K562 (cell line): ENCODE measurements at regions of chr5 and their contacts with region 1.

Region 1: GRCh38 chr5:112551419-112552032 is 132.4 kb upstream of the EPB41L4A start:
- DNase-seq: peak; percentile 43 to 75 (median 48)
- ATAC-seq: peak; percentile 43
- H3K4me3 ChIP-seq: no peak overlapping the region
- H3K27ac ChIP-seq: no peak overlapping the region
- H3K4me1 ChIP-seq: peaks cover 16 to 37% of the 10 kb centered on the region in 2 experiments
- H3K27me3 ChIP-seq: peaks cover 0 to 5% of the 10 kb centered on the region in 2 experiments; a peak in 1 of 5 replicates
- CTCF ChIP-seq: peak; percentile 51 to 88 (median 69); a peak in 5 of 6 replicates
- EP300 ChIP-seq: no peak
- POLR2A ChIP-seq: no peak
- RAD21 ChIP-seq: peak; percentile 94 to 95

Region 2: DNA sequence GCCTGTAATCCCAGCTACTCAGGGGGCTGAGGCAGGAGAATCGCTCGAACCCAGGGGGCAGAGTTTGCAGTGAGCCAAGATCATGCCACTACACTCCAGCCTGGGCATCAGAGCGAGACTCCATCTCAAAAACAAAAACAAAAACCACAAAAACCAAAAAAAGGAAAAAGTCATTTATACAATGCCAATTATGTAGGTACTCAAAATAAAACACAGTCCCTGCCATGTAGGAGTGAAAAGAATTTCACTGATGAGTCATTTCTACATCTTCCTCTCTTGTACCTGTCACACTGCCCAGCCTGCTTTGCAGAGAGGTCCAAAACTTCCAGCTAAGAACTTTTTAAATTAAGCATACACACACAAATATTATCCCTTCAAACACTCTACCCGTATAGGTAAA is 348.3 kb before region 1 on chr5:
- CTCF ChIA-PET with region 1: no interaction called
- POLR2A ChIA-PET with region 1: no interaction called
- in situ Hi-C with region 1: no loop called
- intact Hi-C with region 1: no loop called
- DNase-seq: no peak
- ATAC-seq: no peak
- H3K4me3 ChIP-seq: no peak overlapping the region
- H3K27ac ChIP-seq: no peak overlapping the region
- H3K4me1 ChIP-seq: peaks cover 0 to 14% of the 10 kb centered on the region in 2 experiments; a peak in 3 of 5 replicates
- H3K27me3 ChIP-seq: peaks cover 5 to 6% of the 10 kb centered on the region in 2 experiments; a peak in 4 of 5 replicates
- CTCF ChIP-seq: no peak
- EP300 ChIP-seq: no peak
- POLR2A ChIP-seq: no peak
- RAD21 ChIP-seq: no peak

Region 3: GRCh38 chr5:112492291-112492690 is 59.2 kb before region 1 on chr5:
- CTCF ChIA-PET with region 1: no interaction called
- POLR2A ChIA-PET with region 1: interaction called, 3 read pairs
- in situ Hi-C with region 1: no loop called
- intact Hi-C with region 1: loop called (anchors 10 kb)
- DNase-seq: peak; percentile 35 to 67 (median 48)
- ATAC-seq: peak; percentile 99
- H3K4me3 ChIP-seq: no peak overlapping the region
- H3K27ac ChIP-seq: no peak overlapping the region
- H3K4me1 ChIP-seq: no peaks in the 10 kb centered on the region
- H3K27me3 ChIP-seq: no peaks in the 10 kb centered on the region; a peak in 1 of 5 replicates
- CTCF ChIP-seq: peak; percentile 80 to 97 (median 86)
- EP300 ChIP-seq: no peak
- POLR2A ChIP-seq: no peak
- RAD21 ChIP-seq: peak; percentile 35 to 59; a peak in 3 of 4 replicates

Region 4: GRCh38 chr5:112669328-112669963 is 117.9 kb after region 1 on chr5:
- CTCF ChIA-PET with region 1: no interaction called
- POLR2A ChIA-PET with region 1: no interaction called
- in situ Hi-C with region 1: no loop called
- intact Hi-C with region 1: loop called (anchors 10 kb)
- DNase-seq: no peak
- ATAC-seq: no peak; the same call in 2 of the 3 replicates
- H3K4me3 ChIP-seq: no peak overlapping the region
- H3K27ac ChIP-seq: no peak overlapping the region
- H3K4me1 ChIP-seq: no peaks in the 10 kb centered on the region
- H3K27me3 ChIP-seq: peaks cover 0 to 7% of the 10 kb centered on the region in 2 experiments; a peak in 4 of 5 replicates
- CTCF ChIP-seq: no peak
- EP300 ChIP-seq: no peak
- POLR2A ChIP-seq: no peak
- RAD21 ChIP-seq: no peak

Region 5: GRCh38 chr5:112737463-112738190 is 186.1 kb after region 1 on chr5 and contains the start of gene APC:
- CTCF ChIA-PET with region 1: no interaction called
- POLR2A ChIA-PET with region 1: no interaction called
- in situ Hi-C with region 1: no loop called
- intact Hi-C with region 1: loop called (anchors 5 kb)
- DNase-seq: peak; percentile 91 to 95 (median 93)
- ATAC-seq: peak; percentile 93
- H3K4me3 ChIP-seq: peak within 1 kb of the TSS; percentile 50
- H3K27ac ChIP-seq: peak within 1 kb of the TSS; percentile 79
- H3K4me1 ChIP-seq: peaks cover 17 to 20% of the 10 kb centered on the region in 2 experiments
- H3K27me3 ChIP-seq: no peaks in the 10 kb centered on the region
- CTCF ChIP-seq: 0 out of 6 replicates have a peak, but pooled peaks of 2 of the 3 experiments have one; percentile 5
- EP300 ChIP-seq: peak; percentile 34; the same call in 1 of the 2 replicates
- POLR2A ChIP-seq: peak; percentile 80
- RAD21 ChIP-seq: no peak
- polyA plus RNA-seq, gene APC: 5.7 to 9.3 TPM

Region 6: GRCh38 chr5:112757468-112758208 is 206.1 kb after region 1 on chr5:
- CTCF ChIA-PET with region 1: interaction called, 28 read pairs
- POLR2A ChIA-PET with region 1: no interaction called
- in situ Hi-C with region 1: loop called (anchors 5 kb)
- intact Hi-C with region 1: loop called (anchors 1 kb)
- DNase-seq: peak in 3 of 4 experiments; percentile 8 to 68 (median 31)
- ATAC-seq: peak; percentile 96
- H3K4me3 ChIP-seq: no peak overlapping the region
- H3K27ac ChIP-seq: no peak overlapping the region
- H3K4me1 ChIP-seq: no peaks in the 10 kb centered on the region
- H3K27me3 ChIP-seq: no peaks in the 10 kb centered on the region
- CTCF ChIP-seq: peak; percentile 60 to 84 (median 63)
- EP300 ChIP-seq: no peak
- POLR2A ChIP-seq: no peak
- RAD21 ChIP-seq: peak; percentile 95 to 97

Region 7: GRCh38 chr5:112921833-112922817 is 370.6 kb after region 1 on chr5 and contains the start of gene REEP5:
- CTCF ChIA-PET with region 1: no interaction called
- POLR2A ChIA-PET with region 1: no interaction called
- in situ Hi-C with region 1: no loop called
- intact Hi-C with region 1: loop called (anchors 2 kb)
- DNase-seq: peak; percentile 90 to 93 (median 92)
- ATAC-seq: peak; percentile 91
- H3K4me3 ChIP-seq: peak within 1 kb of the TSS; percentile 92
- H3K27ac ChIP-seq: peak within 1 kb of the TSS; percentile 89
- H3K4me1 ChIP-seq: peaks cover 18 to 20% of the 10 kb centered on the region in 2 experiments
- H3K27me3 ChIP-seq: no peaks in the 10 kb centered on the region
- CTCF ChIP-seq: peak; percentile 62 to 88 (median 79)
- EP300 ChIP-seq: no peak
- POLR2A ChIP-seq: peak; percentile 91
- RAD21 ChIP-seq: peak; percentile 72 to 86
- polyA plus RNA-seq, gene REEP5: 100 to 102 TPM

Region 8: DNA sequence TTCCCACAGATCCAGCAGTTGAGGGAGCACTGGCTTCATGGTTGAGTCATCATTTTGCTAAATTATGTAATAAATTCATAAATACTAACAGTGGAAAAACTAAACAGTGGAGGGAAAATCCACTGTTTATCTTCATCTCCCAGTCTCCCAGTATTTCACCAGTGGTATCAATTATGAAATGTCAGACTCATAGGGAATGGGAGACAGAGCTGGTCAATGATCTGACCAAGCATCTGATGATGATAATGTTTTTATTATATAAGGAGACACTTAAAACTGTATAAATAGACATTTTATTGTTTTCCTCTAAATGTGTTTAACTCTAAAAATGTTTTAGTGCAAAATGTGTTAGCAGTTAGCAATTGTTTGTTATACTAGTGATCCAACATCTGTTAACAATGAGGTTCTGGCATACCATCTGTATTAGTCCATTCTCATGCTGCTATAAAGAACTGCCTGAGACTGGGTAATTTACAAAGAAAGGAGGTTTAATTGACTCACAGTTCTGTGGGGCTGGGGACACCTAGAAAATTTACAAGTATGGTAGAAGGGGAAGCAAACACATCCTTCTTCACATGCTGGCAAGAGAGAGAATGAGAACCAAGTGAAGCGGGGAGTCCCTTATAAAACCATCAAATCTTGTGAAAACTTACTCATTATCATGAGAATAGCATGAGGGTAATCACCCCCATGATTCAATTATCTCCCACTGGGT is 382.3 kb after region 1 on chr5:
- CTCF ChIA-PET with region 1: no interaction called
- POLR2A ChIA-PET with region 1: no interaction called
- in situ Hi-C with region 1: no loop called
- intact Hi-C with region 1: no loop called
- DNase-seq: no peak
- ATAC-seq: no peak
- H3K4me3 ChIP-seq: no peak overlapping the region
- H3K27ac ChIP-seq: no peak overlapping the region
- H3K4me1 ChIP-seq: peaks cover 0 to 7% of the 10 kb centered on the region in 2 experiments; a peak in 3 of 5 replicates
- H3K27me3 ChIP-seq: no peaks in the 10 kb centered on the region
- CTCF ChIP-seq: no peak
- EP300 ChIP-seq: no peak
- POLR2A ChIP-seq: no peak
- RAD21 ChIP-seq: no peak

Region 9: GRCh38 chr5:113606298-113607134 is 1055.0 kb after region 1 on chr5:
- CTCF ChIA-PET with region 1: no interaction called
- POLR2A ChIA-PET with region 1: no interaction called
- in situ Hi-C with region 1: no loop called
- intact Hi-C with region 1: loop called (anchors 10 kb)
- DNase-seq: peak; percentile 53 to 79 (median 61)
- ATAC-seq: peak; percentile 99
- H3K4me3 ChIP-seq: no peak overlapping the region
- H3K27ac ChIP-seq: no peak overlapping the region
- H3K4me1 ChIP-seq: peaks cover 0 to 5% of the 10 kb centered on the region in 2 experiments; a peak in 3 of 5 replicates
- H3K27me3 ChIP-seq: no peaks in the 10 kb centered on the region
- CTCF ChIP-seq: peak; percentile 76 to 86 (median 86)
- EP300 ChIP-seq: no peak
- POLR2A ChIP-seq: no peak
- RAD21 ChIP-seq: peak; percentile 91 to 95